ENCODE measurements at regions of chr15 and their contacts with region 1.

Region 1: DNA sequence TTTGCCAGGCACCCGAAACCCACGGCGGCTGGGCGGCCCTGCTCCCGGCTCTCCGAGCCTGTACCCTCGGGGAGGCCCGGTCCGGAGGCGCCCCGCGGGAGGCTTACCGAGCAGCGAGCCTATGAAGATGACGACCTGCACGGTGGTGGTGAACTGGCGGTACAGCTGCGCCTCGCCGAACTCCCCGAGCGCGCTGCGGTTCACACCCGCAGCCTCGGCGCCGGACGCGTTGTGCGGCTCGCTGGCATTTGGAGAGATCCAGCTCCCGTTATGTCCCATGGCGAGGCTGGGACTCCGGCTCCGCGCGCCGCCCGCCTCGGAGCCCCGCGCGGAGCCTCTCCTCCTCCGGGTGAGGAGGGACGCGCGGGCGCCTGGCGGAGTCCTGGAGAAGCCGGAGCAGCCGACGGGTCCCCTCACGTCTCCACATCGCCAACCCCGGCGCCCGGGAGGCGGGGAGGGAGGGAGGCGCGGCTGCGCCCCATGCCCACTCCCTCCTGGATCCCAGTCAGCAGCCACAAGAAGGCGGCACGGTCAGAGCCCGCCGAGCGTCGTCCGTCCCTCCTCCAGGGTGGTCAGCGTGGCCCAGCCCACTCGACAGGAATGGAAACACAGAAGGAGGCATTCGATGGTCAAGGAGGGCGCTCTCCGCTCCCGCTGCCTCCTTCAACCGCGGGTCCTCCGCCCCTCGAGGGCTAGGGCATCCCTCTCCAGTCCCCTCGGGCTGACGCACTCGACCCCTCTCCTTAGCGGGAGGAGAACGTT is at the start of gene GPR176:
- DNase-seq: peak; percentile 84
- ATAC-seq: peak; percentile 84
- H3K4me3 ChIP-seq: peak within 1 kb of the TSS; percentile 76
- H3K27ac ChIP-seq: peak within 1 kb of the TSS; percentile 89
- H3K4me1 ChIP-seq: peaks cover 4% of the 10 kb centered on the region
- H3K27me3 ChIP-seq: no peaks in the 10 kb centered on the region
- CTCF ChIP-seq: no peak; the same call in 1 of the 2 replicates
- POLR2A ChIP-seq: peak; percentile 89
- RAD21 ChIP-seq: no peak; the same call in 1 of the 2 replicates
- total RNA-seq, gene GPR176: 194 and 246 TPM in 2 replicates

Region 2: GRCh38 chr15:39145854-39146625 is 773.9 kb before region 1 on chr15:
- CTCF ChIA-PET with region 1: no interaction called
- POLR2A ChIA-PET with region 1: no interaction called
- dilution Hi-C with region 1: no loop called
- in situ Hi-C with region 1: no loop called
- intact Hi-C with region 1: no loop called
- DNase-seq: peak; percentile 44
- ATAC-seq: peak; percentile 49; the same call in 1 of the 2 replicates
- H3K4me3 ChIP-seq: no peak overlapping the region
- H3K27ac ChIP-seq: no peak overlapping the region
- H3K4me1 ChIP-seq: peaks cover 13% of the 10 kb centered on the region
- H3K27me3 ChIP-seq: no peaks in the 10 kb centered on the region
- CTCF ChIP-seq: no peak
- POLR2A ChIP-seq: no peak
- RAD21 ChIP-seq: no peak

Region 3: GRCh38 chr15:39874890-39875549 is 44.9 kb before region 1 on chr15:
- CTCF ChIA-PET with region 1: no interaction called
- POLR2A ChIA-PET with region 1: no interaction called
- dilution Hi-C with region 1: no loop called
- in situ Hi-C with region 1: no loop called
- intact Hi-C with region 1: no loop called
- DNase-seq: no peak
- ATAC-seq: no peak
- H3K4me3 ChIP-seq: no peak overlapping the region
- H3K27ac ChIP-seq: no peak overlapping the region
- H3K4me1 ChIP-seq: peaks cover 16% of the 10 kb centered on the region
- H3K27me3 ChIP-seq: no peaks in the 10 kb centered on the region
- CTCF ChIP-seq: peak; percentile 51
- POLR2A ChIP-seq: no peak
- RAD21 ChIP-seq: peak; percentile 52

Region 4: DNA sequence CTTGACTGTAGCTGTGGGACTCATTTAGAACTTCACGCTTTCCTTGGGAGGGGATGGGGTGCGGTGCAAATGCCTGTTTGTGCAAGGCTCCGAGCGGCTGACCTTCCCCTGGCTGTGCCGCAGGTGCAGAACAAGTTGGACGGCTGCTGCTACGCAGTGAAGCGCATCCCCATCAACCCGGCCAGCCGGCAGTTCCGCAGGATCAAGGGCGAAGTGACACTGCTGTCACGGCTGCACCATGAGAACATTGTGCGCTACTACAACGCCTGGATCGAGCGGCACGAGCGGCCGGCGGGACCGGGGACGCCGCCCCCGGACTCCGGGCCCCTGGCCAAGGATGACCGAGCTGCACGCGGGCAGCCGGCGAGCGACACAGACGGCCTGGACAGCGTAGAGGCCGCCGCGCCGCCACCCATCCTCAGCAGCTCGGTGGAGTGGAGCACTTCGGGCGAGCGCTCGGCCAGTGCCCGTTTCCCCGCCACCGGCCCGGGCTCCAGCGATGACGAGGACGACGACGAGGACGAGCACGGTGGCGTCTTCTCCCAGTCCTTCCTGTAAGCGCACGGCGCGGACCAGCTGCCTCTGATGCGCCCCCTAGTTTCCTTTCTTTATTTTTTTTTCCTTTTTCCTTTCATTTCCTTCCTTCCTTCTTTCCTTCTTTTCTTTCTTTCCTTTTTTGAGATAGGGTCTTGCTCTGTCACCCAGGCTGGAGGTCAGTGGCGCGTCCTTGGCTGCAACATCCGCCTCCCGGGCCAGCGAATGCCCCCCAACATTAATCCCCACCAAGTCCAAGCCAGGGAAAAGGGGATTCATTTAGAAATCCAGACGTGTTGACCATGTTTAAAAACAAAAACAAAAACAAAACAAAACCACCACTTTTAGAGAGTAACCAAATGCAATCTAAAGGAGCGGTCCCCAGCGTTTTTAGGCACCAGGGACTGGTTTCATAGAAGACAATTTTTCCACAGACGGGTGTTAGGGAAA is 56.7 kb after region 1 on chr15:
- CTCF ChIA-PET with region 1: no interaction called
- POLR2A ChIA-PET with region 1: no interaction called
- dilution Hi-C with region 1: no loop called
- in situ Hi-C with region 1: no loop called
- intact Hi-C with region 1: loop called (anchors 1 kb)
- DNase-seq: peak; percentile 52
- ATAC-seq: peak; percentile 93
- H3K4me3 ChIP-seq: peak overlapping the region; percentile 50
- H3K27ac ChIP-seq: peak overlapping the region; percentile 45
- H3K4me1 ChIP-seq: peaks cover 6% of the 10 kb centered on the region
- H3K27me3 ChIP-seq: no peaks in the 10 kb centered on the region
- CTCF ChIP-seq: peak; percentile 51
- POLR2A ChIP-seq: no peak
- RAD21 ChIP-seq: peak; percentile 41

Region 5: GRCh38 chr15:40072216-40072990 is 152.5 kb after region 1 on chr15:
- CTCF ChIA-PET with region 1: no interaction called
- POLR2A ChIA-PET with region 1: no interaction called
- dilution Hi-C with region 1: no loop called
- in situ Hi-C with region 1: no loop called
- intact Hi-C with region 1: no loop called
- DNase-seq: no peak
- ATAC-seq: no peak
- H3K4me3 ChIP-seq: no peak overlapping the region
- H3K27ac ChIP-seq: no peak overlapping the region
- H3K4me1 ChIP-seq: peaks cover 11% of the 10 kb centered on the region
- H3K27me3 ChIP-seq: no peaks in the 10 kb centered on the region
- CTCF ChIP-seq: no peak
- POLR2A ChIP-seq: no peak
- RAD21 ChIP-seq: no peak

Region 6: GRCh38 chr15:40121911-40122638 is 202.1 kb after region 1 on chr15:
- CTCF ChIA-PET with region 1: no interaction called
- POLR2A ChIA-PET with region 1: no interaction called
- dilution Hi-C with region 1: no loop called
- in situ Hi-C with region 1: no loop called
- intact Hi-C with region 1: no loop called
- DNase-seq: no peak
- ATAC-seq: no peak
- H3K4me3 ChIP-seq: no peak overlapping the region
- H3K27ac ChIP-seq: no peak overlapping the region
- H3K4me1 ChIP-seq: no peaks in the 10 kb centered on the region; the same call in 1 of the 2 replicates
- H3K27me3 ChIP-seq: peaks cover 12% of the 10 kb centered on the region
- CTCF ChIP-seq: no peak
- POLR2A ChIP-seq: no peak
- RAD21 ChIP-seq: no peak